HepG2 (cell line): ENCODE measurements at regions of chr1 and their contacts with region 1.

Region 1: GRCh38 chr1:192920412-192920811 is 111.6 kb downstream of the RGS2 start:
- DNase-seq: no peak
- ATAC-seq: no peak
- H3K4me3 ChIP-seq: no peak overlapping the region
- H3K27ac ChIP-seq: no peak overlapping the region
- H3K4me1 ChIP-seq: no peaks in the 10 kb centered on the region
- H3K27me3 ChIP-seq: no peaks in the 10 kb centered on the region
- CTCF ChIP-seq: no peak
- EP300 ChIP-seq: no peak
- POLR2A ChIP-seq: no peak
- RAD21 ChIP-seq: no peak

Region 2: GRCh38 chr1:192873012-192873411 is 47.4 kb before region 1 on chr1:
- CTCF ChIA-PET with region 1: no interaction called
- POLR2A ChIA-PET with region 1: no interaction called
- in situ Hi-C with region 1: no loop called
- intact Hi-C with region 1: loop called (anchors 5 kb)
- DNase-seq: no peak
- ATAC-seq: no peak
- H3K4me3 ChIP-seq: no peak overlapping the region
- H3K27ac ChIP-seq: no peak overlapping the region
- H3K4me1 ChIP-seq: no peaks in the 10 kb centered on the region
- H3K27me3 ChIP-seq: no peaks in the 10 kb centered on the region; a peak in 1 of 5 replicates
- CTCF ChIP-seq: no peak
- EP300 ChIP-seq: no peak
- POLR2A ChIP-seq: no peak
- RAD21 ChIP-seq: no peak

Region 3: DNA sequence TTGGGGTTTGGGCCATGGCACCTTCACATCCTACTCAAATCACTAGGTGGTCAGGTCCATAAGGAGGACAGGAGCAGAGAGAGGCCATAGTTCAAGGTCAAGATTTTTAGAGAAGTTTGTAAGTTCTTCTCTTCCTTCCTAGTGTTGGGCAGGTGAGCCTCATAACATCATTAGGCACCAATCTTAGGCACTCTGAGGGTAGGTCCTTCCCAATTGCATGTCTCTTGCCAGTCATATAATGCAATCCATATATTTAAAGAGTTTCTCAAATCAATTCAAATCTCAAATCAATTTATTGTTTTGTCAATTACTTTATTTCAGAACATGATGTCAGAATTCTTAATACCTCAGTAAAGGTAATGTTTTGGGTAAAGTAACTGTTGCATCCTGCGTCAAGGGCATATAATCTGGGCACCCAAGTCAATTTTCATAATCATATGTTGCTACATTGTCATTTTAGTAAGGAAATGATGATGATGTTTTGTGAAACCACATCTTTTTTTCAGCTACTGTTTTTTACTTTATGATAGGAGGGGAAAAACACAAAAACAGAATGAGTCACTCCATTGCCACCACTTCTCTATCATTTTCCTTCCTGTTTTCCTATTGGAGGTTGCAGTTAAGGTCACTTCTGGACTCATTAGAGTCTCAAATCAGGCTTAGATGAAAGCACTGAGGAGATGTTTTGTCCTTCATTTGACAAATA is 16.1 kb after region 1 on chr1:
- CTCF ChIA-PET with region 1: no interaction called
- POLR2A ChIA-PET with region 1: no interaction called
- in situ Hi-C with region 1: no loop called
- intact Hi-C with region 1: no loop called
- DNase-seq: no peak
- ATAC-seq: no peak
- H3K4me3 ChIP-seq: no peak overlapping the region
- H3K27ac ChIP-seq: no peak overlapping the region
- H3K4me1 ChIP-seq: no peaks in the 10 kb centered on the region
- H3K27me3 ChIP-seq: no peaks in the 10 kb centered on the region; a peak in 1 of 5 replicates
- CTCF ChIP-seq: no peak
- EP300 ChIP-seq: no peak
- POLR2A ChIP-seq: no peak
- RAD21 ChIP-seq: no peak

Region 4: GRCh38 chr1:192974701-192975100 is 54.3 kb after region 1 on chr1:
- CTCF ChIA-PET with region 1: no interaction called
- POLR2A ChIA-PET with region 1: no interaction called
- in situ Hi-C with region 1: no loop called
- intact Hi-C with region 1: no loop called
- DNase-seq: no peak
- ATAC-seq: no peak
- H3K4me3 ChIP-seq: no peak overlapping the region
- H3K27ac ChIP-seq: no peak overlapping the region
- H3K4me1 ChIP-seq: no peaks in the 10 kb centered on the region
- H3K27me3 ChIP-seq: no peaks in the 10 kb centered on the region; a peak in 1 of 5 replicates
- CTCF ChIP-seq: no peak
- EP300 ChIP-seq: no peak
- POLR2A ChIP-seq: no peak
- RAD21 ChIP-seq: no peak

Region 5: DNA sequence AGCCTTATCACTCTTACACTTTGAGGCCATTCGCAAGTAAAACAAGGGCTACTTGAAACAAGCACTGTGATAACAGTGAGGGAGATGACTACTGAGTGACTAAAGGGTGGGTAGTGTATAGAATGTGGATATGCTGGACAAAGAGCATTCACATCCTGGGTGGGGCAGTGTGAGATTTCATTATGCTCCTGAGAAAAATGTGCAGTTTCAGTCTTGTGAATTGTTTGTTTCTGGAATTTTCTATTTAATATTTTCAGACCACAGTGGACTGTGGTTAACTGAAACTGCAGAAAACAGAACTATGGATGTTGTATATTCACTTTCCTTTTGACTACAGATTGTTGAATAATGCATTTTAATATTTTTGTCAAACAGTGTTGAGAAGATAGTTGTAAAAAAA is 291.1 kb after region 1 on chr1:
- CTCF ChIA-PET with region 1: no interaction called
- POLR2A ChIA-PET with region 1: no interaction called
- in situ Hi-C with region 1: no loop called
- intact Hi-C with region 1: no loop called
- DNase-seq: peak; percentile 25
- ATAC-seq: no peak
- H3K4me3 ChIP-seq: no peak overlapping the region
- H3K27ac ChIP-seq: no peak overlapping the region
- H3K4me1 ChIP-seq: peaks cover 9% of the 10 kb centered on the region; the same call in 1 of the 2 replicates
- H3K27me3 ChIP-seq: no peaks in the 10 kb centered on the region
- CTCF ChIP-seq: no peak
- EP300 ChIP-seq: no peak
- POLR2A ChIP-seq: no peak
- RAD21 ChIP-seq: no peak

Region 6: GRCh38 chr1:193558491-193559028 is 638.1 kb after region 1 on chr1:
- CTCF ChIA-PET with region 1: no interaction called
- POLR2A ChIA-PET with region 1: no interaction called
- in situ Hi-C with region 1: no loop called
- intact Hi-C with region 1: no loop called
- DNase-seq: no peak
- ATAC-seq: no peak
- H3K4me3 ChIP-seq: no peak overlapping the region
- H3K27ac ChIP-seq: no peak overlapping the region
- H3K4me1 ChIP-seq: no peaks in the 10 kb centered on the region
- H3K27me3 ChIP-seq: no peaks in the 10 kb centered on the region
- CTCF ChIP-seq: no peak
- EP300 ChIP-seq: no peak
- POLR2A ChIP-seq: no peak
- RAD21 ChIP-seq: no peak